ENCODE measurements at regions of chr16 and their contacts with region 1.

Region 1: DNA sequence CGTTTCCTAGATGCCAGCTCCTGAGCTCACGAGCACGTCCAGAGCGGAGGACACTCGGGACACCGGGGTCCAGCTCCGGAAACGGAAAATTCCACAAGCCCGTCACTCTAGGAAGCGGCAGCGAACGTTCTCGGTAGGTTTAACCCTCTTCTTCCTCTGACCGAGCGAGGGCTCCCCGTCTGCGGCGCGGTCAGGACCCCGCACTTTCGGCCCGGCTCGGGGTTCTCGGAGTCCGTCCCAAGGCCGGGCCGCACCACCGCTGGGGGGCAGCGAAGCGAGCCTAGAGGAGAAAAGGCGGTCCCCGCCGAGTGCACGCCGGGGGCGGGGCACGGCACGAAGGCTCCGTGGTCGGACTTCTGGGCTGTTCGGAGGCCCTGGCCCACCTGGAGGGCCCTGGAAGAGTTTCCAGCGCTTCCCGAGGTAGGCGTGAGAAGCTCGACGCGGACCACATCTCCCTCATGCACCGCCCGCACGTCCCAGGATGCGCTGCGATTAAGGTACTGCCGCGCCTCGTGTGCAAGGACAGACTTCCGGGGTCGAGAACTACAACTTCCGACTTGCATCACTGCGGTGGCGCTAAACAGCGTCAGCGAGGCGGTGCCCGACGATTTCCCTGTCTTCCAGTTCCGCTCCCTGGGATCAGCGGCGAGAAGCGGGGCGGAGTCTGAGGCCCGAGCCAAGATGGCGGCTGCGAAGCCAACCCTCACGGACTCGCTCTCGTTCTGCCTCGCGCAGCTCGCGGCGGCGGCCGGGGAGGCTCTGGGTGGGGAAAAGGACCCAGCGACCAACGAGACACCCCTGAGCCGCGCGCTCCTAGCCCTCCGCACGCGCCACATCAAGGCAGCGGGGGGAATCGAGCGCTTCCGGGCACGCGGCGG is at the start of gene ARMC5:
- DNase-seq: peak; percentile 98
- H3K4me3 ChIP-seq: peak within 1 kb of the TSS; percentile 71
- H3K27ac ChIP-seq: peak within 1 kb of the TSS; percentile 91
- H3K4me1 ChIP-seq: peaks cover 27% of the 10 kb centered on the region
- H3K27me3 ChIP-seq: no peaks in the 10 kb centered on the region
- CTCF ChIP-seq: peak; percentile 47
- total RNA-seq, gene ARMC5: 5.5 to 13.2 TPM

Region 2: DNA sequence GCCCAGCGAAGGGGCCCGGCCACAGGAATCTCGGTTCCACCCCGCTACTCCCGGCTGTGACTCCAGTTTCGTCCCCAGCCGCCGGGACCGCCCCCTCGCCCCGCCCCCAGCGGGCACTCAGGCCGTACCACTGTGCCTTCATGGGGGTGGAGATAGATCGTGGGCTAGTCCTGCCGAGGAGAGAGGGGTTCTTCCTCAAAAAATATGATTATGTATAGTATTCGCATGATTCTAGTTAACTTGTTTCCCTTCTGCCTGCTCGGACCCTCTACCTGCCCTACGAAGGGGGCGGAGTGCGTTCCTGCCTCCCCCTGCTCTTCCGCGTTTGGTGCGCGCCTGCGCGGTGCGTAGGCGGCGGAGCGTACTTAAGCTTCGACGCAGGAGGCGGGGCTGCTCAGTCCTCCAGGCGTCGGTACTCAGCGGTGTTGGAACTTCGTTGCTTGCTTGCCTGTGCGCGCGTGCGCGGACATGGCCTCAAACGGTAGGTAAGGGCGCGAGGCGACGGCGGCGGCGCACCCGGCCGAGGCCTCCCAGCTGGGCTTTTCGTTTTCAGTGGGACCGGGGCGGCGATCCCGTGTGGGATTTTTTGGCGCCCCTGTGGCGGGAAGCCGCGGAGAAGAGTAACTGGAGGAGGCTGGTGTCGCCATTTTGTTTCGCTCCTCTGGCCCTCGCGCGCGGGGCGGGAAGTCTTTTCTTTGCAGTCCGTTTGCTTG is 279.2 kb before region 1 on chr16 and contains the start of gene FUS:
- intact Hi-C with region 1: loop called (anchors 10 kb)
- DNase-seq: peak; percentile 93
- H3K4me3 ChIP-seq: peak within 1 kb of the TSS; percentile 79
- H3K27ac ChIP-seq: peak within 1 kb of the TSS; percentile 81
- H3K4me1 ChIP-seq: peaks cover 14% of the 10 kb centered on the region
- H3K27me3 ChIP-seq: no peaks in the 10 kb centered on the region
- CTCF ChIP-seq: no peak
- total RNA-seq, gene FUS: 134 to 252 TPM

Region 3: GRCh38 chr16:31404353-31405064 is 54.6 kb before region 1 on chr16:
- intact Hi-C with region 1: no loop called
- DNase-seq: no peak
- H3K4me3 ChIP-seq: no peak overlapping the region
- H3K27ac ChIP-seq: no peak overlapping the region
- H3K4me1 ChIP-seq: no peaks in the 10 kb centered on the region
- H3K27me3 ChIP-seq: no peaks in the 10 kb centered on the region
- CTCF ChIP-seq: no peak

Region 4: GRCh38 chr16:31678649-31679325 is 219.7 kb after region 1 on chr16:
- intact Hi-C with region 1: no loop called
- DNase-seq: no peak
- H3K4me3 ChIP-seq: no peak overlapping the region
- H3K27ac ChIP-seq: no peak overlapping the region
- H3K4me1 ChIP-seq: no peaks in the 10 kb centered on the region
- H3K27me3 ChIP-seq: no peaks in the 10 kb centered on the region
- CTCF ChIP-seq: no peak

Region 5: GRCh38 chr16:31868691-31869167 is 409.6 kb after region 1 on chr16:
- intact Hi-C with region 1: loop called (anchors 10 kb)
- DNase-seq: peak; percentile 88
- H3K4me3 ChIP-seq: no peak overlapping the region
- H3K27ac ChIP-seq: peak overlapping the region; percentile 1
- H3K4me1 ChIP-seq: no peaks in the 10 kb centered on the region
- H3K27me3 ChIP-seq: no peaks in the 10 kb centered on the region
- CTCF ChIP-seq: peak; percentile 80